K562 (cell line): ENCODE measurements at regions of chr13 and their contacts with region 1.

Region 1: GRCh38 chr13:29210676-29211075 is 384.8 kb downstream of the SLC7A1 start:
- DNase-seq: no peak
- ATAC-seq: no peak
- H3K4me3 ChIP-seq: no peak overlapping the region
- H3K27ac ChIP-seq: no peak overlapping the region
- H3K4me1 ChIP-seq: no peaks in the 10 kb centered on the region
- H3K27me3 ChIP-seq: no peaks in the 10 kb centered on the region
- CTCF ChIP-seq: no peak
- EP300 ChIP-seq: no peak
- POLR2A ChIP-seq: no peak
- RAD21 ChIP-seq: no peak

Region 2: DNA sequence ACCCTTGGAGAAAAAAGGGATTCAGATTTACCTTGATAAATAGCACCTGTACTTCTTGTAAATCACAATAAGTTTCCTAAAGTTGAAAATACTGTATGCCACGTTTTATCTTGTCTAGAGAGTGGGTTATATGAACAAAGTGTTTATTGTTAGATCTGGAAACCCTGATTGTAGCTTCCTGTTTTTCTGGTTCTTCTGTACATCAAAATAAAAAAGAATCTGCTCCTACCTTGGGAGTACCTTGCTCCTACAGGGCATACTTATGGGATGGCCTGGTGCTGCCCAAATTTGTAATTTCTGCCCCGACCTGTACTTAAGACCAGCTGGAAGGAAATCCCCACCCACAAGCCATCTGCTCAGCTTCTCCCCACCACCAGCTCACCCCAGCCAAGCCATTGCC is 143.7 kb after region 1 on chr13:
- CTCF ChIA-PET with region 1: no interaction called
- POLR2A ChIA-PET with region 1: no interaction called
- in situ Hi-C with region 1: loop called (anchors 5 kb)
- intact Hi-C with region 1: no loop called
- DNase-seq: no peak
- ATAC-seq: no peak
- H3K4me3 ChIP-seq: no peak overlapping the region
- H3K27ac ChIP-seq: no peak overlapping the region
- H3K4me1 ChIP-seq: 0 out of 5 replicates have a peak, but pooled peaks cover 0 to 3% of the 10 kb centered on the region in 2 experiments
- H3K27me3 ChIP-seq: peaks cover 0 to 17% of the 10 kb centered on the region in 2 experiments; a peak in 2 of 5 replicates
- CTCF ChIP-seq: no peak
- EP300 ChIP-seq: no peak
- POLR2A ChIP-seq: no peak
- RAD21 ChIP-seq: no peak

Region 3: GRCh38 chr13:29472332-29472961 is 261.8 kb after region 1 on chr13:
- CTCF ChIA-PET with region 1: no interaction called
- POLR2A ChIA-PET with region 1: no interaction called
- in situ Hi-C with region 1: no loop called
- intact Hi-C with region 1: no loop called
- DNase-seq: peak; percentile 41 to 69 (median 51)
- ATAC-seq: peak; percentile 87
- H3K4me3 ChIP-seq: no peak overlapping the region
- H3K27ac ChIP-seq: no peak overlapping the region
- H3K4me1 ChIP-seq: peaks cover 0 to 8% of the 10 kb centered on the region in 2 experiments; a peak in 1 of 5 replicates
- H3K27me3 ChIP-seq: no peaks in the 10 kb centered on the region; a peak in 1 of 5 replicates
- CTCF ChIP-seq: peak; percentile 94 to 100 (median 99)
- EP300 ChIP-seq: no peak
- POLR2A ChIP-seq: no peak
- RAD21 ChIP-seq: peak; percentile 65 to 82